HEK293 (cell line): ENCODE measurements at regions of chr17 and their contacts with region 1.

Region 1: GRCh38 chr17:75109407-75110233 is at the start of gene ARMC7:
- H3K4me3 ChIP-seq: peak within 1 kb of the TSS; percentile 75
- H3K27ac ChIP-seq: peak within 1 kb of the TSS; percentile 67; the same call in 1 of the 2 replicates
- H3K4me1 ChIP-seq: peaks cover 17% of the 10 kb centered on the region
- CTCF ChIP-seq: peak; percentile 10; the same call in 1 of the 2 replicates

Region 2: GRCh38 chr17:74702116-74702871 is 407.3 kb before region 1 on chr17:
- CTCF ChIA-PET with region 1: no interaction called
- POLR2A ChIA-PET with region 1: no interaction called
- H3K4me3 ChIP-seq: no peak overlapping the region
- H3K27ac ChIP-seq: no peak overlapping the region
- H3K4me1 ChIP-seq: no peaks in the 10 kb centered on the region
- CTCF ChIP-seq: no peak

Region 3: GRCh38 chr17:74776044-74776977 is 333.3 kb before region 1 on chr17 and contains the start of gene NAT9:
- CTCF ChIA-PET with region 1: no interaction called
- POLR2A ChIA-PET with region 1: no interaction called
- H3K4me3 ChIP-seq: peak within 1 kb of the TSS; percentile 84
- H3K27ac ChIP-seq: peak within 1 kb of the TSS; percentile 50
- H3K4me1 ChIP-seq: peaks cover 3% of the 10 kb centered on the region; the same call in 1 of the 2 replicates
- CTCF ChIP-seq: no peak

Region 4: DNA sequence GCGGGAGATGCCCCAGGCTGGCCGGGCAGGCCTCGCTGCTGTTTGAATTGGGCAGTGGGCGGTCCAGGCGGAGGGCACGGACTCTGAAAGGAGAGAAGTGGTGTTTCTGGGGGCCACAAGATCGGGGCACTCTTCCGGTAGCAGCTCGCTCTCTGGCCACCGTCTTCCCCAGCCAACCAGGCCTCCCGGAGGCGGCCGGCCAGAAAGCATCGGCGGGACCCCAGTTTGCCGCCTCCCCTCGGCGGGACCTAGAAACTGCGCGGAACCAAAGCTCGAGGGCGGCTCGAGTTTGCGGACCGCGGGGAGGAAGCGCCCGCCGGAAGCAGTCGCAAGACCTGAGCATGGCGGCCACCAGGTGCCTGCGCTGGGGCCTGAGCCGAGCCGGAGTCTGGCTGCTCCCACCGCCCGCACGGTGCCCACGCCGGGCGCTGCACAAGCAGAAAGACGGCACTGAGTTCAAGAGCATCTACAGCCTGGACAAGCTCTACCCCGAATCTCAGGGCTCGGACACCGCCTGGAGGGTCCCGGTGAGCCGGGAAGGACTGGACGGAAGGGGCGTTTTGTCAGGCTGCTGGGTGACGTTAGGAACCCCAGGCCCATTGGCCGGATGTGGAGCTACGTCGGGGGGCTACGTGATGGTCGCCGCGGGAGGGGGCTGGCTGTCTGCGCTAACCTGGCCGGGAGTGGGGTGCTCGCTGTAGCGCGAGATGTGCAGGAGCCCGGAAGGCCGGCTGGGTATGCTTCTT is 97.1 kb before region 1 on chr17 and contains the start of gene MRPL58:
- CTCF ChIA-PET with region 1: interaction called, 12 read pairs
- POLR2A ChIA-PET with region 1: interaction called, 8 read pairs
- H3K4me3 ChIP-seq: peak within 1 kb of the TSS; percentile 81
- H3K27ac ChIP-seq: peak within 1 kb of the TSS; percentile 83
- H3K4me1 ChIP-seq: peaks cover 26% of the 10 kb centered on the region
- CTCF ChIP-seq: peak; percentile 97

Region 5: DNA sequence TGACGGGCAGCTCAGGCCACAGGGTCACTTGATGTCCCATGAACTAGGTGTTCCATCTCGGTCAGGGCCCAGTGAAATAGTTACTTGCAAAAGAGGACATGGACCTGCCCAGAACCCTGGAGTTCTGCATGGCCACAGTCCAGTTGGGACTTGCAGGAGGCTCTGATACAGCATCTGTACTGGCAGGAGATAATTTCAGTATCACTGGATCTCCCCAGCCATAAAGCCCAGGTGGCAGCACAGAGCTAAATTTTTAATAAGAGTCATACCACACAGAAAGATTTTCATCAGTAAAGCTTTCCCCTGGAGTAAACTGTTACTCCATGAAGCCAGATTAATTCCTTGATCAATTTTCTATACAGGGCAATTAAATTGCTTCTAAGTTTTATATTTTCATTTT is 39.8 kb before region 1 on chr17:
- CTCF ChIA-PET with region 1: interaction called, 117 read pairs
- POLR2A ChIA-PET with region 1: interaction called, 8 read pairs
- H3K4me3 ChIP-seq: no peak overlapping the region
- H3K27ac ChIP-seq: no peak overlapping the region
- H3K4me1 ChIP-seq: no peaks in the 10 kb centered on the region
- CTCF ChIP-seq: no peak

Region 6: DNA sequence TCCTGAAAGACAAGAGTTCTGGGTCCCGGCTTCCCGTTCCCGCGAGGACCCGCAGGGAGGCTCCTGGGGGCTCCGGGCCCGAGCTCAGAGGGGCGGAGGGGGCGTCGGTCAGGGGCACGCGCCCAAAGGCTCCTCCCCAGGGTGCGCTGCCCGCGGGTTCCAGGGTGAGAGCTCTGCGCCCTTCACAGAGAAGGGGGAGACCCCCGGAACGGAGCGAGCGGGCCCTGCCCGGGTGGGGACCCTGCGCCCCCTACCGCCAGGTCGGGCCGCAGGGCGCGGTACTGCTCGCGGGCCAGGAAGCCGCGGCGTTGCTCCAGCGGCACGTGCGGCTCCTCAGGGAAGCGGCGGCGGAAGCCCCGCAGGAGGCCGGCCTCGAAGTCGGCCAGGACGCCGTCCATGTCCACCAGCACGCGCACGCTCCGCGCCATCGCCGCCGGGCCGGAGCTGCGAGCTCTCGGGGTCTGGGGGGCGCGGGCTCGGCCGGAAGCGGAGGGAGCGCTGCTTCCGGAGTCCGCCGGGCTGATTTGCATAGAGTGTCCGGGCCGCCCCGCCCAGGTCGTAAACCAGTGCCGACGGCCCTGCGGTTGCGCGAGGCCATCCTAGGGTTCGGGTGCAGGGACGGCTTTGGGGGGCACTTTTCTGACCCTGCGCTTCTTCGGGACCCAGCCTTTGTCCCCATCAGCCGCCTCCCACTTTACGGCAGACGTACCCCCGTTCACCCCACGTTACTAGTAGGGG is 21.8 kb after region 1 on chr17 and contains the start of gene NT5C:
- CTCF ChIA-PET with region 1: interaction called, 86 read pairs
- POLR2A ChIA-PET with region 1: interaction called, 13 read pairs
- H3K4me3 ChIP-seq: peak within 1 kb of the TSS; percentile 61
- H3K27ac ChIP-seq: peak within 1 kb of the TSS; percentile 94
- H3K4me1 ChIP-seq: peaks cover 3% of the 10 kb centered on the region; the same call in 1 of the 2 replicates
- CTCF ChIP-seq: peak; percentile 87

Region 7: DNA sequence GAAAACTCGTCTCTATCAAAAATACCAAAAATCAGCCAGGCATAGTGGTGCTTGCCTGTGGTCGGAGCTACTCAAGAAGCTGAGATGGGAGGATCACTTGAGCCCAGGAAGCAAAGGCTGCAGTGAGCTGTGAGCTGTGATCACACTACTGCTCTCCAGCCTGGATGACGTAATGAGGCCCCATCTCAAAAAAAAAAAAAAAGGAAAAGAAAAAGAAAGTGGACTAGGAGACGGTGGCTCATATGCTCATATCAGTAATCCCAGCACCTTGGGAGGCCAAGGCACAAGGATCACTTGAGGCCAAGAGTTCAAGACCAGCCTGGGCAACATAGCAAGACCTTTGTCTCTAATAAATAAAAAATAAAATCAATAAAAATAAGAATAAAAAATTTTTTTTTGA is 82.0 kb after region 1 on chr17:
- CTCF ChIA-PET with region 1: interaction called, 17 read pairs
- POLR2A ChIA-PET with region 1: no interaction called
- H3K4me3 ChIP-seq: no peak overlapping the region
- H3K27ac ChIP-seq: no peak overlapping the region
- H3K4me1 ChIP-seq: no peaks in the 10 kb centered on the region
- CTCF ChIP-seq: no peak

Region 8: DNA sequence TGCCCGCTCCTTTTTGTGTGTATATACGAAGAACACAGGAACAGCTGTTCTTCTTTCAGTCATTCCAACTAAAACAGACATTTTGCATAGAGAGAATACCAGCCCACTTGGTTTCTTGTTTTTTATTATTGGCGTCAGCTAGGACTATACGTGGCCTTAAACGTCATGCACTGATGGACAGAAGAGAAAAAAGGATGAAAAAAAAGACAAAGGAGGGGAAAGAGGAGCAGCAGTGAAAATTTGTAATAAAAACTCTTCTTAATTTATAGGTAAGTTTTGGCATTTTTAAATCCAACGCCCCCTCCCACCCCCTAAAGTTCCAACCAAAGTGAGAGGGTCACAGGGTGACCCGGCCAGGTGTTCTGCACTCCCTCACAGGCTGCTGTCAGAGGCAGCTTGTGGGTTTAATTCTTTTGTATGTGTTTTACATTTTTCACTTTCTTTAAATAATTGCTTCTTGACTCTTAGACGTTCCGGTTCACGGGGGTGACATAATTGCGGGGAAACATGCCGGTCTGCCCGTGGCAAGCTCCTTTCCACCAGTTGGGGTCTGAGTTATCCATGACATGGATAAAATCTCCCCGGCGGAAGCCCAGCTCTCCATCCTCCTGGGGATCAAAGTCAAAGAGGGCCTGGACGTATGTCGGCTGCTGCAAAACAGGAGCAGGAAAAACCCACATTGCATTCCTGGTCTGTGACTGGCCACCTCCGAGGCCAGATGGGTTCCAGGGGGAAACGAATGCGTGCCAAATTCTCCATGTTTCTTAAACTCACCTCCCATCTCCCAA is 210.5 kb after region 1 on chr17:
- CTCF ChIA-PET with region 1: no interaction called
- POLR2A ChIA-PET with region 1: no interaction called
- H3K4me3 ChIP-seq: no peak overlapping the region
- H3K27ac ChIP-seq: no peak overlapping the region
- H3K4me1 ChIP-seq: peaks cover 5% of the 10 kb centered on the region
- CTCF ChIP-seq: no peak

Region 9: DNA sequence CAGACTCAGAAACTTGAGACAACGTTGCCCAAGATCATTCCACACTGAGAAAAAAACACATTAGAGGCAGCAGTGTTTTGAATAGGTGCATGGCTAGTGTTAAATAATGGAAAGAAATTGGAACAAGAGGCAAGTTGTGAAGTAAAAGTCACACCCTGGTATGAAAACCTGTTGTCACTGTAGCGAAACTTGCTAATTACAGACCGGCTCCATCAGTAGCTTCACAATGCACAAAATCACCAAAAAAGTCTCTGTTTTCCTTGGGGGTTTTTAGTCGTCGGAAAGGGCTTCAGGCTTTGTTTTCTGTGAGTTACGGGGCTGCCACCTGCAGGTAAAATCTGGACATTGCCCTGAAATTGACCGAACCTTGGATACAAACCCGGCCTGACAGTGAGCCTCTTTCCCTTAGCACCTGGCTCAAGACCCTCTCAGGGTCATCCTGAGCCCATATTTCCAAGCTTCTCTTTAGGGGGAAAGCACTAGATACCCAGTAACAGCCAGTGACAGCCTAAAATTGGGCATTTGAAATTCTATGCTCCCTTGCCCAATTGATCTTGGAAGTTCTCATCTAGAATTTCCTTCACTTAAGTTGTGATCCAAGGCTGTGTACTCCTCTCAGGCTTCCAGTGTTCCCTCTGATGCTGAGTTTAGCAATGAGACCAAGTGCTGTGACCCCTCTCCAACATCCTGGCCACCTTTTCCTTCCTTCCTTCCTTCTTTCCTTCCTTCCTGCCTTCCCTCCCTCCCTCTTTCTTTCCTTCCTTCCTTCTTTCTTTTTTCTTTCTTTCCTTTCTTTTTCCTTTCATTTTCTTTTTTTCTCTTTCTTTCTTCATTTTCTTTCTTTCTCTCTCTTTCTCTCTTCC is 303.1 kb after region 1 on chr17:
- CTCF ChIA-PET with region 1: interaction called, 21 read pairs
- POLR2A ChIA-PET with region 1: no interaction called
- H3K4me3 ChIP-seq: no peak overlapping the region
- H3K27ac ChIP-seq: no peak overlapping the region
- H3K4me1 ChIP-seq: no peaks in the 10 kb centered on the region
- CTCF ChIP-seq: peak; percentile 81